ENCODE measurements at regions of chr11 and their contacts with region 1.

Region 1: GRCh38 chr11:102914238-102915043 is 39.7 kb upstream of the MMP12 start:
- DNase-seq: peak; percentile 34
- ATAC-seq: peak; percentile 94
- H3K4me3 Mint-ChIP-seq: no peak overlapping the region
- H3K27ac Mint-ChIP-seq: no peak overlapping the region
- H3K4me1 Mint-ChIP-seq: peaks cover 21% of the 10 kb centered on the region
- H3K27me3 Mint-ChIP-seq: no peaks in the 10 kb centered on the region
- CTCF ChIP-seq: no peak

Region 2: GRCh38 chr11:102771351-102771750 is 143.1 kb before region 1 on chr11:
- CTCF ChIA-PET with region 1: no interaction called
- POLR2A ChIA-PET with region 1: no interaction called
- DNase-seq: no peak
- ATAC-seq: no peak
- H3K4me3 Mint-ChIP-seq: no peak overlapping the region
- H3K27ac Mint-ChIP-seq: no peak overlapping the region
- H3K4me1 Mint-ChIP-seq: no peaks in the 10 kb centered on the region
- H3K27me3 Mint-ChIP-seq: no peaks in the 10 kb centered on the region
- CTCF ChIP-seq: no peak

Region 3: DNA sequence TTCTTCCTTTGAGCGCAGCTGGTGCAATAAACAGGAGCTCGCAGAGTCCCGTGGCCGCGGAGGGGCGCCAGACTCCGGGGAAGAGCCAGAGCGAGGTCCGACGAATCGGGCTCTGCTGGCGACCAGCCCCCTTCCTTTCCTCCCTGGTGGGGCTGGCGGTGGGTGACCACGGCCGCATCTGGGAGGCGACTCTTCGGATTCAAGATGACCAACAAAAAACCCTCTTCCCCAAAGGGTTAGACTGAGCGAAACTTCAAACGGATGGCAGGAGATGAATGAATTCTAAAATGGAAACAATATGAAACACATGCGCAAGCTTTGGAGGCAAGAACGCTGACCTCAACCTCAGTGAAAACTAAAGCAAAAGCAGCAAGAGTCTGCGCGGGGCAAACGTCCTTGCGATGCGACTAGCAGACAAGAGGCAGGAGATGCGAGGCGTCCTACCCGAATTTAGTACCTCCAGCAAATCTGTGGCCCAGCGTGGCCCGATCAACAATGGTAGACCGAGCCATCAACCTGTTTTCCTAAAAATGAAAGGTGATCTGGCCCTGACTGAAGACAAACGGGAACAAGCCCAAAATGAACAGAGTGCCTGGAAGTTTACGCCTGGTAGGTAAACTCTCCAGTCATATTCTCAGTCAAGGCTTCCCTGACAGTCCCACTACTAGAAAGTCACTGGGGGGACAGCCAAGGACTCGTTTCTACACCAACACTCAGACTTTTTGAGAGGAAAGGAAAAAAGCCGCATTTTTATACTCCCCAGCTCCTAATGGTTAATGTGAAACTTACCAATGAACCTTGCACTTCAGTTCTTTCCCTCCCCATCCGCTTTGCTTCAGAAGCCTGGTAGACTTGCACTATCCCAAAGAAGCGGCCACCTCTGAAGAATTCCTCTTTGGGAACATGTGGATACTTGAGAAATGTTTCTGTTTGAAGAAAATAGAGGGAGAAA is 82.7 kb before region 1 on chr11:
- CTCF ChIA-PET with region 1: interaction called, 11 read pairs
- POLR2A ChIA-PET with region 1: no interaction called
- DNase-seq: peak; percentile 77
- ATAC-seq: peak; percentile 91
- H3K4me3 Mint-ChIP-seq: peak overlapping the region; percentile 51
- H3K27ac Mint-ChIP-seq: no peak overlapping the region
- H3K4me1 Mint-ChIP-seq: peaks cover 32% of the 10 kb centered on the region
- H3K27me3 Mint-ChIP-seq: peaks cover 4% of the 10 kb centered on the region; the same call in 1 of the 2 replicates
- CTCF ChIP-seq: no peak

Region 4: DNA sequence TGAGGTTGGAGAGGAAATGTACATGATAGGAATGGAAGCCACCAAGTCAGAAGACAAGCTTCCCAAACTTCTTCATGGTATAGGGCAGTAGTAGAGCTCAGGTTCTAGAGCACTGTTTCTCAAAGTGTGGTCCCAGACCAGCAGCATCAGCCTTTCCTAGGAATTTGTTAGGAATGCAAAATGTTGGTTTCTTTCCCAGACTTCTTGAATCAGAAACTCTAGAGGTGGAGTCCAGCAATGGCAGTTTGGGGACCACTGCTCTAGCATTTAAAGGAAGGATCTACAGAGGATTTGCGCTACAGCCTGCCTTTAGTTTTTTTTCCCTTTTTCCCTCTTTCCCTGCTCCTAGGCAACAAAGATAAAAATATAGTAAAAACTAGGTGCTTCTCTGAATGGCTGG is 22.7 kb before region 1 on chr11:
- CTCF ChIA-PET with region 1: interaction called, 11 read pairs
- POLR2A ChIA-PET with region 1: no interaction called
- DNase-seq: no peak
- ATAC-seq: no peak
- H3K4me3 Mint-ChIP-seq: no peak overlapping the region
- H3K27ac Mint-ChIP-seq: no peak overlapping the region
- H3K4me1 Mint-ChIP-seq: no peaks in the 10 kb centered on the region
- H3K27me3 Mint-ChIP-seq: no peaks in the 10 kb centered on the region; the same call in 1 of the 2 replicates
- CTCF ChIP-seq: no peak

Region 5: GRCh38 chr11:102924851-102925381 is 10.5 kb after region 1 on chr11:
- CTCF ChIA-PET with region 1: interaction called, 34 read pairs
- POLR2A ChIA-PET with region 1: no interaction called
- DNase-seq: no peak
- ATAC-seq: no peak
- H3K4me3 Mint-ChIP-seq: no peak overlapping the region
- H3K27ac Mint-ChIP-seq: no peak overlapping the region
- H3K4me1 Mint-ChIP-seq: no peaks in the 10 kb centered on the region
- H3K27me3 Mint-ChIP-seq: no peaks in the 10 kb centered on the region
- CTCF ChIP-seq: no peak

Region 6: DNA sequence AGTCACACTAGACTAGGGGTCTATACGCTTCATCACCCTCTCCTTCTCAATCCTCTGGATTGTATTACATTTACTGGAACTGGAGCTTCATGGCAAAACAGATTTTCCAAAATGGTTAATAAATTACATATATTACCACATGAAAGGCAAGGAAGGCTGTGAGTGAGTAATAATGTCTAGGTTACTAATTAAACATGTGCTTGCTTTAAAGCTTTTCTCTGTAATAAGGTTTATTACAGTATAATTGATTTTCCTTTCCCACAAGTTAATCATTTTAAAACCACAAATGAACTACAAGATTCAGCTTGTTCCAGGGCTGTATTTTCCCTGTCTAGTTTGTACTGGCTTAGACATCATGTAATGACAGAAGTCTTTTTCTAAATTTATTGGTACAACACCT is 15.5 kb after region 1 on chr11:
- CTCF ChIA-PET with region 1: interaction called, 34 read pairs
- POLR2A ChIA-PET with region 1: no interaction called
- DNase-seq: no peak
- ATAC-seq: no peak
- H3K4me3 Mint-ChIP-seq: no peak overlapping the region
- H3K27ac Mint-ChIP-seq: no peak overlapping the region
- H3K4me1 Mint-ChIP-seq: no peaks in the 10 kb centered on the region
- H3K27me3 Mint-ChIP-seq: no peaks in the 10 kb centered on the region
- CTCF ChIP-seq: no peak

Region 7: GRCh38 chr11:102940714-102941588 is 26.5 kb after region 1 on chr11:
- CTCF ChIA-PET with region 1: interaction called, 20 read pairs
- POLR2A ChIA-PET with region 1: no interaction called
- DNase-seq: peak; percentile 47
- ATAC-seq: peak; percentile 96
- H3K4me3 Mint-ChIP-seq: no peak overlapping the region
- H3K27ac Mint-ChIP-seq: no peak overlapping the region
- H3K4me1 Mint-ChIP-seq: peaks cover 21% of the 10 kb centered on the region
- H3K27me3 Mint-ChIP-seq: no peaks in the 10 kb centered on the region
- CTCF ChIP-seq: peak; percentile 60